IMR-90 (cell line): ENCODE measurements at regions of chr1 and their contacts with region 1.

Region 1: GRCh38 chr1:115469703-115470476 is 131.8 kb upstream of the NGF start:
- DNase-seq: peak; percentile 55
- ATAC-seq: peak; percentile 91
- H3K4me3 ChIP-seq: no peak overlapping the region
- H3K27ac ChIP-seq: no peak overlapping the region
- H3K4me1 ChIP-seq: 0 out of 2 replicates have a peak, but pooled peaks cover 2% of the 10 kb centered on the region
- H3K27me3 ChIP-seq: no peaks in the 10 kb centered on the region; the same call in 1 of the 2 replicates
- CTCF ChIP-seq: peak; percentile 93
- POLR2A ChIP-seq: no peak
- RAD21 ChIP-seq: peak; percentile 97

Region 2: DNA sequence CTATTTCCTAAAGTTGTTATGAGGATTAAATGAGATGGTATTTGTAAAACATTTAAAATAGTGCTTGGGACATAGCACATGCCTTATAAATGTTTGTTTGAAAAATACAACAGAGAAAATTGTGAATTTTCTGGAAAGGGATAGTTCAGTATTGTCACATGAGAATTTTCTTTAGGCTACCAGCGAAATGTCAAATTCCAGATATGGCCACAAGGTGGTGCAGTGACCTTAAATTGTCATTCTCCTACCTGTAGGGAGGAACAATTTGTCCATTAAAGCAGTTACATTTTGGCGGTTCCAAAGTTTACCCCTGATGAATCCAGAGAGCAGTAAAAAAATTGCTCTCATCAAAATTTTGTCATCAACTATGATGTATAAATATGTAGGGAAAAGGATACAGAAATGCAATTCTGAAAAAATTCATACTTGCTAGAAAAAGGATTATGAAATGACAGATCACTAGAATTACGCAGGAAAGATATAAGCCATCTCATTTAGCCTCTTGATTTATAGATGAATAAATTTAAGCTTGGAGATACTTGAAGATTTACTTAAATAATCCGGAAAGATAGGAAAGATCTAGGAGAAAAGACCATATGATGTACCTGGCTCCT is 490.5 kb before region 1 on chr1:
- CTCF ChIA-PET with region 1: no interaction called
- POLR2A ChIA-PET with region 1: no interaction called
- dilution Hi-C with region 1: no loop called
- in situ Hi-C with region 1: loop called (anchors 10 kb)
- intact Hi-C with region 1: loop called (anchors 5 kb)
- DNase-seq: peak; percentile 52
- ATAC-seq: peak; percentile 65; the same call in 1 of the 2 replicates
- H3K4me3 ChIP-seq: no peak overlapping the region
- H3K27ac ChIP-seq: no peak overlapping the region
- H3K4me1 ChIP-seq: no peaks in the 10 kb centered on the region
- H3K27me3 ChIP-seq: no peaks in the 10 kb centered on the region; the same call in 1 of the 2 replicates
- CTCF ChIP-seq: peak; percentile 73
- POLR2A ChIP-seq: no peak
- RAD21 ChIP-seq: peak; percentile 74

Region 3: GRCh38 chr1:114986286-114986685 is 483.6 kb before region 1 on chr1:
- CTCF ChIA-PET with region 1: no interaction called
- POLR2A ChIA-PET with region 1: no interaction called
- dilution Hi-C with region 1: no loop called
- in situ Hi-C with region 1: loop called (anchors 10 kb)
- intact Hi-C with region 1: loop called (anchors 5 kb)
- DNase-seq: no peak
- ATAC-seq: no peak
- H3K4me3 ChIP-seq: no peak overlapping the region
- H3K27ac ChIP-seq: no peak overlapping the region
- H3K4me1 ChIP-seq: no peaks in the 10 kb centered on the region
- H3K27me3 ChIP-seq: no peaks in the 10 kb centered on the region
- CTCF ChIP-seq: no peak
- POLR2A ChIP-seq: no peak
- RAD21 ChIP-seq: no peak

Region 4: GRCh38 chr1:115275212-115275611 is 194.7 kb before region 1 on chr1:
- CTCF ChIA-PET with region 1: interaction called, 3 read pairs
- POLR2A ChIA-PET with region 1: no interaction called
- dilution Hi-C with region 1: no loop called
- in situ Hi-C with region 1: no loop called
- intact Hi-C with region 1: loop called (anchors 10 kb)
- DNase-seq: peak; percentile 30
- ATAC-seq: no peak; the same call in 1 of the 2 replicates
- H3K4me3 ChIP-seq: no peak overlapping the region
- H3K27ac ChIP-seq: no peak overlapping the region
- H3K4me1 ChIP-seq: peaks cover 3% of the 10 kb centered on the region; the same call in 1 of the 2 replicates
- H3K27me3 ChIP-seq: no peaks in the 10 kb centered on the region
- CTCF ChIP-seq: peak; percentile 48
- POLR2A ChIP-seq: no peak
- RAD21 ChIP-seq: peak; percentile 49

Region 5: DNA sequence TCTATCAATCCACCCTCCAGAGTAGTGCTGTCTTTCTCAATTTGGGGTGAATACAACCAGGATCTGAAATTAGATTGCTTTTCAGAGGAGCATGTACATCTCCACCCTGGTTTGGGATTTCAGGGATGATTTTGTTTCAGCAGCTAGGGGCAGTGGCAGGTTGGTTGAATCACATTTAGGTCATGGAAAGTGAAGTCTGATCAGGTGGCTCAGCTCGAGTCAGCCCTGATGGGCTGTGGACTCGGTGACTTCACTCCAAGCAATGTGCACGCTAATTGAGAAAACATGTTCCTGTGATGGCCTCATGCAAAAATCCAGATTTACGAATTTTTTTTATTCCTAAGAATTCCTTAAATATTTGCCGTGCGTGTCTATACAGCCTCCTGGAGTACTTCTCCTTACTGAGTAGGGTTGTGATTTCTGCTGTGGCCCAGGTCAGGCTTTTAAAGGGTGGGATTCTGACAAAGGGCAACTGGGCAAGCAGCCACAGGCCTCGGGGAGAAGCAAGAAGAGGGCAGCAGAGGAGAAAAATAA is 139.3 kb before region 1 on chr1:
- CTCF ChIA-PET with region 1: interaction called, 5 read pairs
- POLR2A ChIA-PET with region 1: no interaction called
- dilution Hi-C with region 1: no loop called
- in situ Hi-C with region 1: no loop called
- intact Hi-C with region 1: loop called (anchors 1 kb)
- DNase-seq: peak; percentile 96
- ATAC-seq: peak; percentile 78
- H3K4me3 ChIP-seq: no peak overlapping the region
- H3K27ac ChIP-seq: peak overlapping the region; percentile 88
- H3K4me1 ChIP-seq: peaks cover 22% of the 10 kb centered on the region
- H3K27me3 ChIP-seq: no peaks in the 10 kb centered on the region
- CTCF ChIP-seq: peak; percentile 41
- POLR2A ChIP-seq: 0 out of 2 replicates have a peak, but pooled peaks have one; percentile 47
- RAD21 ChIP-seq: peak; percentile 32; the same call in 1 of the 2 replicates

Region 6: GRCh38 chr1:115337633-115338456 is 132.0 kb before region 1 on chr1 and contains the start of gene NGF:
- CTCF ChIA-PET with region 1: interaction called, 5 read pairs
- POLR2A ChIA-PET with region 1: no interaction called
- dilution Hi-C with region 1: no loop called
- in situ Hi-C with region 1: no loop called
- intact Hi-C with region 1: loop called (anchors 2 kb)
- DNase-seq: peak; percentile 78
- ATAC-seq: peak; percentile 96
- H3K4me3 ChIP-seq: peak within 1 kb of the TSS; percentile 84
- H3K27ac ChIP-seq: peak within 1 kb of the TSS; percentile 45; the same call in 1 of the 2 replicates
- H3K4me1 ChIP-seq: peaks cover 5% of the 10 kb centered on the region
- H3K27me3 ChIP-seq: peaks cover 7% of the 10 kb centered on the region; the same call in 1 of the 2 replicates
- CTCF ChIP-seq: no peak
- POLR2A ChIP-seq: peak; percentile 86
- RAD21 ChIP-seq: peak; percentile 38
- total RNA-seq, gene NGF: 8.3 and 12.5 TPM in 2 replicates

Region 7: DNA sequence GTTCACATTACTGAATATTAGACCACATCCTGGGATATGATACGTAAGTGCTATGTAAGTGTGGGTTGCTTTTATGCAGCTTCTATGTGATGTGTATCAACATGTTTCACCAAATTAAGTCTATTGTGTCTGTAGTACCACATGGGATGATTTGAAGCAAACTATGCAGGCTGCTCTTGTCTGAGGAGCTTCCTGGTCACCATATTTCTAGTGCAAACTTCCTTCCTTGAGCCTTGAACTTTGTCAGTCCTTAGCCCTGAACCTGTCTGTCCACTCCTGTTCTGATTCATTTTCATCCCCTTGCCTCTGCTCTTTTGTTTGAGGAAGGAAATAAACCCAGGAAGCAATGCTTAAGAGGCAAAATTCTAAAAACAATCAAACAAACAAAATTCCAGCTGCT is 54.3 kb after region 1 on chr1:
- CTCF ChIA-PET with region 1: no interaction called
- POLR2A ChIA-PET with region 1: no interaction called
- dilution Hi-C with region 1: no loop called
- in situ Hi-C with region 1: no loop called
- intact Hi-C with region 1: no loop called
- DNase-seq: no peak
- ATAC-seq: no peak
- H3K4me3 ChIP-seq: no peak overlapping the region
- H3K27ac ChIP-seq: no peak overlapping the region
- H3K4me1 ChIP-seq: no peaks in the 10 kb centered on the region
- H3K27me3 ChIP-seq: no peaks in the 10 kb centered on the region
- CTCF ChIP-seq: no peak
- POLR2A ChIP-seq: no peak
- RAD21 ChIP-seq: no peak

Region 8: DNA sequence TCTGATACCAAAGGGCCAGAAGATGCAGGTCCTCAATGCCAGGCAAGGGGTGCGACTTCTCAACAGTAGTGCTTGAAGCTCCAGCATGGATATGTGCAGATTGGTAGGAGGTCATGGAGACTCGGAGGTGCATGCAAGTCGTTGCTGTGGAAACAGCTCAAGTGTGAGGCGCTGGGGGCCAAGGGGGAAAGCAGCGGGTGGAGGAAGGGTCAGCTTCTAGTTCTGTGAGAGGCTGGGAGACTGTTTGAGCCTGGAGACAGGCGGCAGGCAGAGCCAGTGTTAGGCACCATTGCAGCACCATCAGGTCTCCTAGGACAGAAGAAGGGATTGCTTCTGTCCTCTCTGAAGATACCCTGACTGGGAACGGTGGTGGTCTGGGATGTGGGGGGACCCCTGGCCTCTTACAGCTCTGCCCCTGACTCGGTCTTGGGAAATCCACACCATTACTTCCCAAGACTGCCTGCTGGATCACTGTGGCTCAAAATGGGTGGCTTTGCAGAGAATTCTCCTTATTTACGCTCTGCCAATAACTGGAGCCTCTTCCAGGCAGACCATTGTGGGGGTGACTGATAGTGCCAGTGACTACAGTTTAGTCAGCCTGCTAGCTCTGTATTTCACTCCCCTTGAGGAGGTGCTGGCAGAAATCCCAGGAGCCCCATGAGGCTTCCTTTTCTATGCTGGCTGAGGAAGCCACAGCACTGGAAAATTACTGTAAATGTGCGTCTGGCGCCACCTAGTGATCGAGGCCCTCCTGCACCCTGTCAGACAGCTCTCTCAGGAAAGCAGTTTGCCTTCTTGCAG is 125.6 kb after region 1 on chr1:
- CTCF ChIA-PET with region 1: interaction called, 12 read pairs
- POLR2A ChIA-PET with region 1: no interaction called
- dilution Hi-C with region 1: no loop called
- in situ Hi-C with region 1: no loop called
- intact Hi-C with region 1: loop called (anchors 1 kb)
- DNase-seq: peak; percentile 96
- ATAC-seq: peak; percentile 96
- H3K4me3 ChIP-seq: no peak overlapping the region
- H3K27ac ChIP-seq: no peak overlapping the region
- H3K4me1 ChIP-seq: 0 out of 2 replicates have a peak, but pooled peaks cover 2% of the 10 kb centered on the region
- H3K27me3 ChIP-seq: no peaks in the 10 kb centered on the region
- CTCF ChIP-seq: peak; percentile 99
- POLR2A ChIP-seq: peak; percentile 61; the same call in 1 of the 2 replicates
- RAD21 ChIP-seq: peak; percentile 98